Activated CD8-positive, alpha-beta T cell treated with anti-CD3 and anti-CD28 coated beads for 36 hours (primary cell): ENCODE measurements at regions of chr16 and their contacts with region 1.

Region 1: DNA sequence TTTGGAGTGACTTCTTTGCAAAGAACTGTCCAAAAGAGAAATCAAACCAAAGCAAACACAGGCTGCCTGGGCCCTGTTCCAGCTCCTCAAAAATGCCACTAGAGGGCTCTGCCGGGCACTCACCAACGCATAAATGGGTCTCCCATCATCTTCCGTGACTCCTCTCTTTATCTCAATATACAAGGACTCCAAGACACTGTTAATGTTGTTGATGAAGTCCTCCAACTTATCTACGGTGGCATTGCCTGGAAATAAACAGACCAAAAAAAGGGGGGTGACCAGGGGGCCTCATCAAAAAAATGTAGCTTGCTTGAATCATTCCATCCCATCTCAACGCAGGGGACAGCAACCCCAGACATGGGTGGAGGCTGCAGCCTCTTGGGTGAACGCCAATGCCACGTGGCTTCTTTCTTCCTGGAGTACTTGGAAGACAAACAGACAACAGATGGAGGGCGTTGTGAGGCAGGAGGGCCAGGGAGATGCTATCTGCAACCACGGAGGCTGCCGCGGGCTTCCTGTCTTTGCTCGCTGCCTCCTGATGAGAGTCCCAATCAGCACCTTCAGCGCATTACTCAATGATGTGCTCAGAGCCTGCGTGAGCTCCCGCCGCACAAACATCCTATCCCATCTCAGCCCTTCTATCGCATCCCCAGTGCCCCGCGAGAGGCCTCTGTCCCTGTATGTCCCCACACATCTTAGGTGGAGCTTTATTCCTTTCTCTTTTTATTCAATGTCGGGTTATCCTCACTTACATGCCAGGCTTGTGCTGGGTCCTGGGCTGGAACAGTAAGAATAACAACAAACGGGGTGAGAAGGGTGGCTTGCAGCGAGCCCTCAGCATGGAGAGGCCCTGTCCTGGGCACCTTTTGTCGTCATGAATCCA is 32.0 kb downstream of the KDM8 start:
- DNase-seq: peak; percentile 94
- ATAC-seq: peak; percentile 31
- H3K4me3 Mint-ChIP-seq: peak overlapping the region; percentile 73
- H3K27ac Mint-ChIP-seq: peak overlapping the region; percentile 98
- H3K4me1 Mint-ChIP-seq: peaks cover 94% of the 10 kb centered on the region
- H3K27me3 Mint-ChIP-seq: no peaks in the 10 kb centered on the region
- CTCF ChIP-seq: peak; percentile 91

Region 2: DNA sequence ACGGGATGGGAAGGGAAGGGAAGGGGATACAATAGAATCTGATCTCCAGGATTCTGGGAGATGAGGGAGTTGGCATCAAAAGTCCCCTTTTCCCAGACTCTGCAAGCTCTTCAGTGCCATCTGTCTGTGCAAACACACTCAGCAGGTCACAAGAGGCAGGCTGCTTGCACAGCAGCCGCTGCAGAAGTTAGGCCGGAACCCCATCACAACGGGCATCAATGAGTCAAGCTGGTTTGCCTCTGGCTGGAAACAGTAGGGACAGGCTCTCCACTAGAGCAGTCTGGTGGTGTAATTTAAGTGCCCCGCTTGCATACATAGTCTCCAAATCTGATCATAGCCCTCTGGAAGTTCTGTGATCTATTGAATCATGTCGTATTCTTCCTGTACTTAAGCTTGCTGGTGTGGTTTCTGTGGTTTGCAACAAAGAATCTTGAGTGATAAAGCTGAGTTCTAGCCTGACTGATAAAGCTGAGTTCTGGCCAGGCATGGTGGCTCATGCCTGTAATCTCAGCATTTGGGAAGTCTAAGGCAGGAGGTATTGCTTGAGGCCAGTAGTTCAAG is 65.7 kb before region 1 on chr16:
- CTCF ChIA-PET with region 1: interaction called, 10 read pairs
- POLR2A ChIA-PET with region 1: interaction called, 5 read pairs
- intact Hi-C with region 1: loop called (anchors 5 kb)
- DNase-seq: peak; percentile 90
- ATAC-seq: peak; percentile 89
- H3K4me3 Mint-ChIP-seq: peak overlapping the region; percentile 27
- H3K27ac Mint-ChIP-seq: peak overlapping the region; percentile 72
- H3K4me1 Mint-ChIP-seq: peaks cover 59% of the 10 kb centered on the region
- H3K27me3 Mint-ChIP-seq: no peaks in the 10 kb centered on the region
- CTCF ChIP-seq: no peak

Region 3: DNA sequence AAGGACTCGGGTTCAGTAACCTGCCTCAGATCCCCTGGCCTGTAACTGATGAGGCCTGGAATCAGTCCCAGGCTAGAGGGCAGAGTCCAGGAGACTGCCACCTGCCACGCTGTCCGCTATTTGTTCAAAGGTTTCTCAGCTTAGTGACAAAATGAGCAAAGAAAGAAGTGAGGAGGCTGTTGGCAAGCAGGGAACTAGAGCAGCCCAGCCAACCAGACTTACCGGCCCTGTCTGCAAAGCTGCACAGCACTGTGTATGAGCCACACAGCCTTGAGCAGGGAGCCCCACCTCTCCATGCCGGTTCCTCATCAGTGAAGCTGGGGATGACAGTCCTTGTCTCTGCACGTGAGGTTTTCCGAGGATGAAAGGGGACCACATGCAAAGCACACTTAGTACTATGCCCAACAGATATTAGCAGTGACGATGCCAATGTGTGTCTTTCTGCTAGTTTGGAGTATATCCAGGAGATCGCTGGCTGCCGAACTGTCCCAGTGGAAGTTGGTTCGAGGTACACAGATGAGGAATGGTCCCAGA is 20.8 kb before region 1 on chr16:
- CTCF ChIA-PET with region 1: interaction called, 10 read pairs
- POLR2A ChIA-PET with region 1: interaction called, 8 read pairs
- intact Hi-C with region 1: no loop called
- DNase-seq: no peak
- ATAC-seq: no peak
- H3K4me3 Mint-ChIP-seq: no peak overlapping the region
- H3K27ac Mint-ChIP-seq: no peak overlapping the region
- H3K4me1 Mint-ChIP-seq: peaks cover 8% of the 10 kb centered on the region
- H3K27me3 Mint-ChIP-seq: no peaks in the 10 kb centered on the region
- CTCF ChIP-seq: no peak

Region 4: DNA sequence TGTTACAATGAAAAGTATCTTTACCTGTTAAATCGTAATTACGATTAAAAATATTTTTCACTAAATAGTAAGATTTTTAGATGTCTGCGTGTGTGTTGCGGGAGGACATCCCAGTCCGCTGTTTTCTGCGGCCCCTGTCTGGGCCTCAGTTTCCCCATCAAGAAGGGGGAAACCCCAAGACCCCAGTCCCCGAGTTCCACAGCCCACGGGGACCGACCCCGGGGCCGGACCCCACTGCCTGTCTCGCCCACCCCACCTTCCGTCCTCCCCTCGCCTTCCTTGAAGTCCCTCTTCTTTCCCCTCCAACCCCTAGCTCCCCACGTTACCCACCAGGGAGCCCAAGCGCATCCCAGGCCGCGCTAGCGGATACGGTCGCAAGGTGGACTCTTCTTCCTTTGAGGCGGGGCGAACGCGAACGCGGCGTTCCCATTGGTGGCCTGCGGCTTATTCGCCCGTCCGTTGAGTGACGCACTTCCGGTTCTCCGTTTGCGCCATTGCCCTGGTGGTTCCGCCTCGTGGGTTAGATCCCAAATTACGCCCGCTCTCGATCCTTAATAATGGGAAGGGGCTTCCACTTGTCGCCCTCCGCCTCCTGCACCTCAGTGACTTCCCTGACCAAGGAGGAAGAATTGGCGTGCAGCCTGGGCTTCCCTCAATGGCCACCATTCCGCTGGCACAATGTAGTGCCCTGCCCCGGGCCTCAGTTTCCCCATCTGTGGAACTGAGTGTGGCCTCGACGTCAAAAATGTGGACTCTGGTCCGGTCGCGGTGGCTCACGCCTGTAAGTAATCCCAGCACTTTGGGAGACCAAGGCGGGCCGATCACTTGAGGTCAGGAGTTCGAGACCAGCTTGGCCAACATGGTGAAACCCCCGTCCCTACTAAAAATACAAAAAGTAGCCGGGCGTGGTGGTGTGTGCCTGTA is 33.3 kb after region 1 on chr16 and contains the start of gene NSMCE1:
- CTCF ChIA-PET with region 1: interaction called, 134 read pairs
- POLR2A ChIA-PET with region 1: interaction called, 134 read pairs
- intact Hi-C with region 1: loop called (anchors 2 kb)
- DNase-seq: peak; percentile 99
- ATAC-seq: peak; percentile 97
- H3K4me3 Mint-ChIP-seq: peak within 1 kb of the TSS; percentile 91
- H3K27ac Mint-ChIP-seq: peak within 1 kb of the TSS; percentile 99
- H3K4me1 Mint-ChIP-seq: peaks cover 71% of the 10 kb centered on the region
- H3K27me3 Mint-ChIP-seq: no peaks in the 10 kb centered on the region
- CTCF ChIP-seq: no peak
- total RNA-seq, gene NSMCE1: 150 to 156 TPM

Region 5: DNA sequence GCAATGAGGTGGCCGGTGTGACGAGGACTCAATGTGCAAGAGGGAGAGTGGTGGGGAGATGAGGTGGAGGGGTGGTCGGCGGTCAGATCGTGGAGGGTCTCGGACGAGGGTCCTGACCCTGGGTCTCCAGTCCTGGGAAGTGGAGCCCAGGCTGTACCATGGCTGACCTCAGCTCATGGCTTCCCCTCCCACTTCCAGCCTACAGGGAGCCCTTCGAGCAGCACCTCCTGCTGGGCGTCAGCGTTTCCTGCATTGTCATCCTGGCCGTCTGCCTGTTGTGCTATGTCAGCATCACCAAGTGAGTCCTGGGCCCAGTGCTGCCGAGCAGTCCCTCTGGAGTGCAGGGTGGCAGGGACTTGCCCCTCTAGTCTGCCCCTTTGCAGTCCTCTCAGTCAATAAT is 120.3 kb after region 1 on chr16:
- CTCF ChIA-PET with region 1: interaction called, 21 read pairs
- POLR2A ChIA-PET with region 1: interaction called, 4 read pairs
- intact Hi-C with region 1: no loop called
- DNase-seq: peak; percentile 57
- ATAC-seq: peak; percentile 69
- H3K4me3 Mint-ChIP-seq: no peak overlapping the region
- H3K27ac Mint-ChIP-seq: peak overlapping the region; percentile 62
- H3K4me1 Mint-ChIP-seq: peaks cover 13% of the 10 kb centered on the region
- H3K27me3 Mint-ChIP-seq: no peaks in the 10 kb centered on the region
- CTCF ChIP-seq: no peak

Region 6: DNA sequence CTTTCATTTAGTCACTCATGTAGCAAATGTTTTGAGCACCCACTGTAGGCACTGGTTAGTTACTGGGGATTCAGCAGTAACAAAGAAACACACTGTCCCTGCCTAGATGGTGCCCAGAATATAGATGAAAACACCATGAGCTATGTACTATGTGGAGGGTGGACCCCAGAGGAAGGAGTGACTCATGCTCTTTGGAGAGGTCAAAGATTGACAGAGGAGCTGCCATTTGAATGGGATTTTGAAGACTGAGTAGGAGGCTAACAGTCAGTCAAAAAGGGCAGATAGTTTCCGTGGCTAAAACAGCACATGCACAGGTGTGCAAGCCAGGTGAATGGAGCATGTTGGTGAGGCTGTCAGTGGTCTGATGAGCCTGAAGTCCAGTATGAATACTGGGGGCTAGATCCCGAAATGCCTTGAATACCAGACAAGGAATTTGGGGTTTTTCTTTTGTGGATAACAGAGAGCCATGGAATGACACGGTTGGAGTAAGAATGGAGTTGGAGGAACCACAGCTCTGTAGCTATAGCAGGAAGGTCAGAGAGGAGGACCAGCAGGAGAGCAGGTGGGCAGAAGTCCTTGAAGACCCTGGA is 172.8 kb after region 1 on chr16:
- CTCF ChIA-PET with region 1: interaction called, 5 read pairs
- POLR2A ChIA-PET with region 1: interaction called, 49 read pairs
- intact Hi-C with region 1: no loop called
- DNase-seq: peak; percentile 86
- ATAC-seq: peak; percentile 72
- H3K4me3 Mint-ChIP-seq: peak overlapping the region; percentile 99
- H3K27ac Mint-ChIP-seq: peak overlapping the region; percentile 96
- H3K4me1 Mint-ChIP-seq: peaks cover 65% of the 10 kb centered on the region
- H3K27me3 Mint-ChIP-seq: no peaks in the 10 kb centered on the region
- CTCF ChIP-seq: no peak